Esophagus muscularis mucosa (tissue), 4 donors: ENCODE measurements at regions of chr2 and their contacts with region 1.

Region 1: GRCh38 chr2:164992818-164993217 is 37.5 kb upstream of the SLC38A11 start:
- DNase-seq: no peak
- H3K4me3 ChIP-seq: no peak overlapping the region
- H3K27ac ChIP-seq: peak overlapping the region in 1 of 4 donors; percentile 70
- H3K4me1 ChIP-seq: peaks cover 10 to 28% (median 18%) of the 10 kb centered on the region in 4 donors
- H3K27me3 ChIP-seq: no peaks in the 10 kb centered on the region
- CTCF ChIP-seq: peak; percentile 60 to 70 (median 64)
- EP300 ChIP-seq: no peak
- POLR2A ChIP-seq: no peak

Region 2: DNA sequence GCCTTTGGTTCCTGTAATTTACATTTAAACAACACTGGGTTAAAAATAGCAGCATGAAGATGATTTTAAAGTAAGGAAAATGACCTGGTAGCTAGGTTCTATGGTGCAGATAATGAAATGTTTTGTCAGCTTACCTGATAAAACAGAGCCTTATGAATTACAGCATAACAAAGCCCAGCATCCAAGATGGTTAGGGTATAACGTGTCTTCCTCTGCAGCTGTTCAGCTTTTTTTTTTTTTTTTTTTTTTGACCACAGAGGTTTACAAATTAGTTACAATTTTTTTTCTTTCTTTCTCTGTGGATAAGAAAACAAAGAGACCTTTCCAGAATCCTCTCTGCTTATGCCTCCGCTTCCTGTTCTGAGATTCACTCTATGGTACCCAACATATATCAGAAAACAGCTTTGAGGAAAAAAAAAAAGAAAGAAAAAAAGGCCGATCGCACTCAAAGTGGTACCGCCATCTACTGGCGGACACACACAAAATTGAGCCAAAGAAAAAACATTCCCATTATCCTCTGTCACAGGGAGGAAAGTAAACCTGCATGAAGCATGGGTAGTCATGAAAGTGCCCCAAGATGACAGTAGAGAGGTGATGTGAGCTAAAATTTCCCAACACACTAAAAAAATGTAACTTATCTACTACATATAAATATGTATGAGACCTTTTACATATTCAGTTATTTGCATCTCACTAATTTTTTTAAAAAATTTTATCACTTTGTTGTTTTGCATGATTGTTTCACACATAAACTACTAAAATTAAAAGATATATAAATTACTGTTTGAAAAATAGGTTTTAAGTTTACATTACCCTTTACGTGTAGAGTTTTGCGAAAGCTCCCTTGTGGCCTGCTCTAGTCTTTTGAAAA is 211.1 kb after region 1 on chr2 and contains the start of gene SCN3A:
- intact Hi-C with region 1: loop called (anchors 5 kb)
- DNase-seq: no peak
- H3K4me3 ChIP-seq: peak within 1 kb of the TSS in 2 of 4 donors; percentile 7 to 14
- H3K27ac ChIP-seq: no peak within 1 kb of the TSS
- H3K4me1 ChIP-seq: no peaks in the 10 kb centered on the region
- H3K27me3 ChIP-seq: no peaks in the 10 kb centered on the region
- CTCF ChIP-seq: peak; percentile 37 to 72 (median 52)
- EP300 ChIP-seq: no peak
- POLR2A ChIP-seq: no peak
- total RNA-seq, gene SCN3A: 1.2 to 2.1 (median 1.7) TPM

Region 3: DNA sequence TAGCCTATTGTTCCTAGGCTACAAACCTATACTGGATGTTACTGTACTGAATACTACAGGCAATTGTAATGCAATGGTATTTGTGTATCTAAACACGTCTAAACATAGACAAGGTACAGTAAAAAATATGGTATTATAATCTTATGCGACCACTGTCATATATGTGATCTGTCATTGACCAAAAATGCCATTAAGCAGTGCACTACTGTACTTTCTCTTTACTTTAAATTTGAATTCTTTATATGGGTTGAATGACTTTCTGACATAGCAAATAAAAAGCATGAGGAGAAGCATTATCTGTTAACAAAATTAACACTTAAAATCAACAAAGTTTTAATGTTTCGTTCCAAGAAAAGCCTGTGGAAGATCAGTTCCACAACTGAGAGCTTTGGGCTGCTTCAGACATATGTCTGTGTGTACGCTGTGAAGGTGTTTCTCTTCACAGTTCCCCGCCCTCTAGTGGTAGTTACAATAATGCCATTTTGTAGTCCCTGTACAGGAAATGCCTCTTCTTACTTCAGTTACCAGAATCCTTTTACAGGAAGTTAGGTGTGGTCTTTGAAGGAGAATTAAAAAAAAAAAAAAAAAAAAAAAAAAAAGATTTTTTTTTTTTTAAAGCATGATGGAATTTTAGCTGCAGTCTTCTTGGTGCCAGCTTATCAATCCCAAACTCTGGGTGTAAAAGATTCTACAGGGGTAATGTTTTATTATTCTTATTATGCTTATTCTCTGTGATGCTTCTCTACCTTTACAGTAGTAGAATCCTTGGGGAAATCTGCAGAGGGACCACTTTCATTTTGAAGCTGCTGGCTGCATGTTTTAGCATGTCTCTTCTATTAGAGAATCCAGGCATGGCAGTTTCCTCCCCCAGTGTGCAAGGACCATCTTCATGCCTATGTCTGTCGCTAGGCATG is 300.9 kb after region 1 on chr2:
- intact Hi-C with region 1: loop called (anchors 5 kb)
- DNase-seq: no peak
- H3K4me3 ChIP-seq: peak overlapping the region in 1 of 4 donors; percentile 12
- H3K27ac ChIP-seq: no peak overlapping the region
- H3K4me1 ChIP-seq: peaks cover 0 to 9% (median 4%) of the 10 kb centered on the region in 4 donors
- H3K27me3 ChIP-seq: no peaks in the 10 kb centered on the region
- CTCF ChIP-seq: peak; percentile 66 to 77 (median 71)
- EP300 ChIP-seq: no peak
- POLR2A ChIP-seq: no peak